Activated CD4-positive, alpha-beta T cell treated with anti-CD3 and anti-CD28 coated beads for 36 hours (primary cell): ENCODE measurements at regions of chr20 and their contacts with region 1.

Region 1: DNA sequence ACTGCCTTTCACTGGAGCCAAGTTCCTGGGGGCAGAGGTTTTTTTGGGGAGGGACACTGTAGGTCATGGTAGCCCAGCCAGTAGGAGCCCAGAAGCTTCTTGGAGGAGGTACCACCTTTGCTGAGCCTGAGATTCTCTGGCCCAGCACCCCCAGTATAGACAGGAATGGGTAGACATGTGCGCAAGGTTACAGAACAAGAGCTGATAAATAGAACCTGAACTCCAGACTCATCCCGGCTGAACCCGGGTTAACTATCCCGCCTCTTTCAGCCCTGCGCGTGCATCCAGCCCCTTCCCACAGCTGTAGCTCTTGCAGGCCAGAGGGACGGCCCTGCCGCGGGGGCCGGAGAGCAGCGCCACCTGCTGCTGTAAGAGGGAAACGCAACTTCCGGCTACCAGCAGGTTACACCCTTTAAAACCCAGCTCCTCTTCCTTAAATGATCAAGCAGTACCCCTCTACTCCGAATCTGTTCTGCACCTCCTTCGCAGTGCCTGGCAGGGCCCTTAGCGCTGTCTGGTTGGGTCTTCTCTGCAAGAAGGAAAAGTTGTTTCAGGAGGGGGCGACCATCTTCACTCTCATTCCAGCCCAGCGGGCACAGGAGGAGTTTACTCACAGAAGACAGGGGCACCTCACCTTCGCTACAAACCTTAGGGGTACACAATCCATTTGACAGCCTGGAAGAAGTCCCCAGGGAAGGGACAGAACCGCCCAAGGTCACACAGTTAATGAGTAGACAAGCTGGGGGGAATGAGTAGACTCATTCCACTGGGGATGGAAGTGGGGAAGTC is 7.5 kb downstream of the SRXN1 start:
- DNase-seq: peak; percentile 83
- ATAC-seq: peak; percentile 87
- H3K4me3 Mint-ChIP-seq: no peak overlapping the region
- H3K27ac Mint-ChIP-seq: no peak overlapping the region
- H3K4me1 Mint-ChIP-seq: peaks cover 14% of the 10 kb centered on the region
- H3K27me3 Mint-ChIP-seq: peaks cover 9% of the 10 kb centered on the region

Region 2: DNA sequence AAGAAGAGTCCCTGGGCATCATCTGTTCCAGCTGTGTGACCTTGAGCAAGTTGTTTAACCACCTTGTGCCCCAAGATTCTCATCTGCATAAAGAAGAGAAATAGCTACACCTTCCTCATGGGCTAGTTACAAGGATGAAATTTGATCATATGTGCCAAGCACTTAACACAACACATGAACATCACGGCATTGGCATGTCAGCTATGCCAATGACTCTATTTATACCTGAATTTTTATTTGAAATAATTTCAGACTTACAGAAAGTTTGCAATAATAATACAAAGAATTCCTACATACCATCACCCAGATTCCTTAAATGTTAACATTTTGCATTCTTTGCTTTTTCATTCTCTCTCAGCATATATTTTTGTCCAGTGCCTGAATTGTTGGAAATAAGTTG is 14.4 kb before region 1 on chr20:
- CTCF ChIA-PET with region 1: interaction called, 15 read pairs
- POLR2A ChIA-PET with region 1: no interaction called
- intact Hi-C with region 1: no loop called
- DNase-seq: no peak
- ATAC-seq: no peak
- H3K4me3 Mint-ChIP-seq: no peak overlapping the region
- H3K27ac Mint-ChIP-seq: no peak overlapping the region
- H3K4me1 Mint-ChIP-seq: no peaks in the 10 kb centered on the region
- H3K27me3 Mint-ChIP-seq: peaks cover 5% of the 10 kb centered on the region

Region 3: GRCh38 chr20:667391-667964 is 22.0 kb after region 1 on chr20:
- CTCF ChIA-PET with region 1: interaction called, 11 read pairs
- POLR2A ChIA-PET with region 1: no interaction called
- intact Hi-C with region 1: no loop called
- DNase-seq: peak; percentile 83
- ATAC-seq: peak; percentile 66
- H3K4me3 Mint-ChIP-seq: no peak overlapping the region
- H3K27ac Mint-ChIP-seq: no peak overlapping the region
- H3K4me1 Mint-ChIP-seq: peaks cover 4% of the 10 kb centered on the region
- H3K27me3 Mint-ChIP-seq: peaks cover 47% of the 10 kb centered on the region

Region 4: GRCh38 chr20:878511-879307 is 233.2 kb after region 1 on chr20:
- CTCF ChIA-PET with region 1: no interaction called
- POLR2A ChIA-PET with region 1: no interaction called
- intact Hi-C with region 1: no loop called
- DNase-seq: peak; percentile 58
- ATAC-seq: no peak
- H3K4me3 Mint-ChIP-seq: no peak overlapping the region
- H3K27ac Mint-ChIP-seq: no peak overlapping the region
- H3K4me1 Mint-ChIP-seq: peaks cover 14% of the 10 kb centered on the region
- H3K27me3 Mint-ChIP-seq: no peaks in the 10 kb centered on the region